Calu3 (cell line): ENCODE measurements at regions of chr17 and their contacts with region 1.

Region 1: GRCh38 chr17:75601057-75602051 is 13.8 kb downstream of the MYO15B start:
- DNase-seq: peak; percentile 91
- H3K4me3 Mint-ChIP-seq: peak overlapping the region; percentile 19
- H3K27ac Mint-ChIP-seq: peak overlapping the region; percentile 84
- H3K4me1 Mint-ChIP-seq: peaks cover 20% of the 10 kb centered on the region
- H3K27me3 Mint-ChIP-seq: no peaks in the 10 kb centered on the region
- CTCF ChIP-seq: peak; percentile 96

Region 2: DNA sequence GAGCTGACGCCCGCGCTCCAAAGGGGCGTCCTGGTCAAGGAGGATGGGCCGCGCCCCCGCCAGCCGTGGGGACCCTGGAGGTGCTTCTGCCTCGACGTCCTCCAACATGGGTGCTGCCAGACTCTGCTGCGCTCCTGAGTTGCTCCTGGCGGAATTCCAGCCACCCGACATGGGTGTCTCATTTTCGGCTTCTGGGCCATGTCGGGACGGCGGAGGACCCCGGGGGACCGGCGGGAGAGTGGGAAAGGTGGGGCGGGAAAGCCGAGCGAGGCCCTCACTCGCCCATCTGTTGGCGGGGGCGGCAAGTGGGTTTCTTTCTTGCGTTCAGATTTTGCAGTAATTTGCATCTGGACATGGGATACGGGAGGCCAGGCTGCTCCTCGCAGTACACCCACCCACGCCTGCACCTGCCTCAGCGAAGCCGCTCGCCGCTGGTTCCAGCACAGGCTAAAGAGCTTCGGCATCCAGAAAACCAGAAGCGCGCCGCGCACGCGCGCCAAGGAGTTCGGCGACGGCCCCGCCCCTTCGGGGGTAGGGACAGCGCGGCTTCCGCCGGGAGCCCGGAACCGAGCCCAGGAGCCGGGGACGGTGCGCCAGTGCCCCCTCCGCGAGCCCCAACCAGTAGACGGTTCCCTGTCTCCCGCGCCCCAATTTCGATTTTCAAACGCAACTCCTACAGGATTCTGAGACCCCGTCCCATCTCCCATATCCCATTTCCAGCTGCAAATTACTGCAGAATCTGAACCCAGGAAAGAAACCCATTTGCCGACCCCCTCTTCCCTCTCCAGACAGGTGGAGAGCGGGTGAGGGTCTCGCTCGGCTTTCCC is 491.7 kb before region 1 on chr17 and contains the start of gene ARMC7:
- CTCF ChIA-PET with region 1: no interaction called
- intact Hi-C with region 1: no loop called
- DNase-seq: peak; percentile 95
- H3K4me3 Mint-ChIP-seq: peak within 1 kb of the TSS; percentile 85
- H3K27ac Mint-ChIP-seq: peak within 1 kb of the TSS; percentile 94
- H3K4me1 Mint-ChIP-seq: peaks cover 33% of the 10 kb centered on the region
- H3K27me3 Mint-ChIP-seq: no peaks in the 10 kb centered on the region
- CTCF ChIP-seq: no peak
- total RNA-seq, gene ARMC7: 18.6 and 19.8 TPM in 2 replicates

Region 3: GRCh38 chr17:75131280-75132017 is 469.9 kb before region 1 on chr17 and contains the start of gene NT5C:
- CTCF ChIA-PET with region 1: no interaction called
- intact Hi-C with region 1: no loop called
- DNase-seq: peak; percentile 85
- H3K4me3 Mint-ChIP-seq: peak within 1 kb of the TSS; percentile 82
- H3K27ac Mint-ChIP-seq: peak within 1 kb of the TSS; percentile 72
- H3K4me1 Mint-ChIP-seq: peaks cover 10% of the 10 kb centered on the region
- H3K27me3 Mint-ChIP-seq: no peaks in the 10 kb centered on the region
- CTCF ChIP-seq: peak; percentile 80
- total RNA-seq, gene NT5C: 56.6 and 58.2 TPM in 2 replicates

Region 4: GRCh38 chr17:75589012-75589918 is 12.1 kb before region 1 on chr17:
- CTCF ChIA-PET with region 1: interaction called, 12 read pairs
- intact Hi-C with region 1: no loop called
- DNase-seq: peak; percentile 95
- H3K4me3 Mint-ChIP-seq: peak overlapping the region; percentile 64
- H3K27ac Mint-ChIP-seq: no peak overlapping the region
- H3K4me1 Mint-ChIP-seq: no peaks in the 10 kb centered on the region
- H3K27me3 Mint-ChIP-seq: peaks cover 15% of the 10 kb centered on the region
- CTCF ChIP-seq: peak; percentile 61

Region 5: GRCh38 chr17:75617218-75617617 is 15.9 kb after region 1 on chr17:
- CTCF ChIA-PET with region 1: interaction called, 43 read pairs
- intact Hi-C with region 1: no loop called
- DNase-seq: peak; percentile 93
- H3K4me3 Mint-ChIP-seq: peak overlapping the region; percentile 59
- H3K27ac Mint-ChIP-seq: peak overlapping the region; percentile 97
- H3K4me1 Mint-ChIP-seq: peaks cover 29% of the 10 kb centered on the region
- H3K27me3 Mint-ChIP-seq: no peaks in the 10 kb centered on the region
- CTCF ChIP-seq: no peak

Region 6: GRCh38 chr17:75632863-75633485 is 31.6 kb after region 1 on chr17 and contains the start of gene SMIM5:
- CTCF ChIA-PET with region 1: interaction called, 69 read pairs
- intact Hi-C with region 1: no loop called
- DNase-seq: peak; percentile 95
- H3K4me3 Mint-ChIP-seq: peak within 1 kb of the TSS; percentile 46
- H3K27ac Mint-ChIP-seq: peak within 1 kb of the TSS; percentile 78
- H3K4me1 Mint-ChIP-seq: peaks cover 14% of the 10 kb centered on the region
- H3K27me3 Mint-ChIP-seq: no peaks in the 10 kb centered on the region
- CTCF ChIP-seq: peak; percentile 92
- total RNA-seq, gene SMIM5: 1.9 and 3.5 TPM in 2 replicates

Region 7: DNA sequence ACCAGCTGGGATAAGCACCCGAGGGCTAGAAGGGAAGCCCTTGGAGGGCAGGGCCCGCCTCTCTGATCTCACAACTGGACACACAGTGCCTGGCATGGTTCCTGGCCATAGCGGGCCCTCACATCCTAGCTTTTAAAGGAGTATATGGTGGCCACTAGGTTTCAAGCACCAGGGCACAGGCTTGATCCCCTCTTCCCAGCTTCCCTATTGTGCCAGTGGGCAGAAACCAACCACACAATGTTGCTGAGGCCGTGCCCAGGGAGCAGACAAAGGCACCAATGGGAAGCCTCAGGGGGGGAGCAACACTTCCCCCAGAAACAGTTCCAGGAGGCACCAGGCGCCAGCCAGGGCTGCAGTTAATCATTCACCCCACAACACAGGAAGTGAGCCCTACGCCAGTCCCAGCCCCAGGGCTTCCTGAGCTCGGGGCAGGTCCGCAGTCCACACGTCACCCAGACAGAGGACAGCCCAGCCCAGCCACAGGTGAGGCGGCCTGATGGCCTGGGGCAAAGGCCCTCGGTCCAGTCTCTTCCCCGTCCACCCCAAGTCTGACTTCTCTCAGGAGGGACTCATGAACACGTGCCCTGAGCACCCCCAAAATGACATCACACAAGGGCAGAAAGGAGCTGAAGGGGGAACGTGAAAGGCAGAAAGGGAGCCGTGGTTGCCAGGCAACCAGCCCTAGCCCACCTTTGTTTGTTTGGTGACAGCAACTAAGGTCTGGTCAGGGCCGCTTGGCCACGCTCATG is 44.7 kb after region 1 on chr17:
- CTCF ChIA-PET with region 1: interaction called, 15 read pairs
- intact Hi-C with region 1: no loop called
- DNase-seq: peak; percentile 96
- H3K4me3 Mint-ChIP-seq: peak overlapping the region; percentile 43
- H3K27ac Mint-ChIP-seq: peak overlapping the region; percentile 96
- H3K4me1 Mint-ChIP-seq: peaks cover 42% of the 10 kb centered on the region
- H3K27me3 Mint-ChIP-seq: no peaks in the 10 kb centered on the region
- CTCF ChIP-seq: no peak

Region 8: DNA sequence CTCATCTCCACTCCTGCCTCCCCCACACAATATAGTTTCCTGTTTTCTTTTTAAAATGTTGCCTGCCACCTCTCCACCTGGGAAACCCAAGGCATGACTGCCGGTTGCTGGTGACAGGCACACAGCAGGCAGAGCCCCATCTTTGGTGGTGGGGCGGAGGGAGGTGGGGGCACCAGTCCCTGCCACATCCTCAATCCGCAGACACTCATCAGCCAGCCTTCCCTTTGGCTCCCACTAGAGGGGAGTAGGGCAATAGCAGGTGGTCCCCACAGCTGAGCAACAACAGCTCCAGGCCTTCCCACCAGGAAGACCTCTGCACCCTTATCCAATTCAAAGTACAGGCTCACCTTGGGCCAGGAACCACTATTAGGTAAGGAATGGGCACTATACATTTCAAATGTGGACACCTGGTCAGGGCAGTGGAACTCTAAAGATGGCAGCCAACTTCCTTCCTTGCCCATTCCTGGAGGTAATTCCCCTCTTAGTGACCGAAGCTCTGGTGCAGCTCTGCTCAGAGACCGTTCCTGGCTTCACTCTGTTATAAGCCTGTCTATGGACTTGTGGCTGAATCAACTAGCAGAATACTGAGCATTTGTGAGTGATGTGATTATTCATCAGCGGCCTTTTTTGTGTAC is 51.7 kb after region 1 on chr17:
- CTCF ChIA-PET with region 1: interaction called, 12 read pairs
- intact Hi-C with region 1: no loop called
- DNase-seq: peak; percentile 63
- H3K4me3 Mint-ChIP-seq: no peak overlapping the region
- H3K27ac Mint-ChIP-seq: no peak overlapping the region
- H3K4me1 Mint-ChIP-seq: no peaks in the 10 kb centered on the region
- H3K27me3 Mint-ChIP-seq: no peaks in the 10 kb centered on the region
- CTCF ChIP-seq: peak; percentile 87